Activated naive CD4-positive, alpha-beta T cell treated with anti-CD3 and anti-CD28 coated beads for 36 hours (primary cell): ENCODE measurements at regions of chr6 and their contacts with region 1.

Region 1: GRCh38 chr6:104659053-104659452 is 200.7 kb downstream of the HACE1 start:
- DNase-seq: no peak
- H3K4me3 Mint-ChIP-seq: no peak overlapping the region
- H3K27ac Mint-ChIP-seq: no peak overlapping the region
- H3K4me1 Mint-ChIP-seq: no peaks in the 10 kb centered on the region
- H3K27me3 Mint-ChIP-seq: peaks cover 2% of the 10 kb centered on the region

Region 2: DNA sequence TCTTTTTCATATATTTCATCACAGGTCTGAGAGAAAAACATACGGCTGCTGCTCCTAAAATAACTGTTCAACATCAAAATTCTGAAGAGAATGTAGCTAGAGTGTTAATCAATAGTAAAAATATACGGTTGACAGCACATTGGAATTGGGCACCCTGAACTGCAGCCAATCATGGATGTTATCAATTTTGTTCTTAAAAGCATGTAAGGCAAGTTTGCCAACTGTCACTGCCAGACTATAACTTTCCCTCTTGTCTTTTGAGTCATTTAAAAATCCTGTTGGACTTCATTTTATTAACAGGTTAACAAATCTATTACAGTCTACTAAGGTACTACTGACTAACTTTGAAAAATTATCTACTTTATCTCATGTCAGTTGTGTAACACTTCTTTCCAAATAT is 392.1 kb before region 1 on chr6:
- CTCF ChIA-PET with region 1: no interaction called
- intact Hi-C with region 1: no loop called
- DNase-seq: no peak
- H3K4me3 Mint-ChIP-seq: no peak overlapping the region
- H3K27ac Mint-ChIP-seq: no peak overlapping the region
- H3K4me1 Mint-ChIP-seq: no peaks in the 10 kb centered on the region
- H3K27me3 Mint-ChIP-seq: no peaks in the 10 kb centered on the region

Region 3: DNA sequence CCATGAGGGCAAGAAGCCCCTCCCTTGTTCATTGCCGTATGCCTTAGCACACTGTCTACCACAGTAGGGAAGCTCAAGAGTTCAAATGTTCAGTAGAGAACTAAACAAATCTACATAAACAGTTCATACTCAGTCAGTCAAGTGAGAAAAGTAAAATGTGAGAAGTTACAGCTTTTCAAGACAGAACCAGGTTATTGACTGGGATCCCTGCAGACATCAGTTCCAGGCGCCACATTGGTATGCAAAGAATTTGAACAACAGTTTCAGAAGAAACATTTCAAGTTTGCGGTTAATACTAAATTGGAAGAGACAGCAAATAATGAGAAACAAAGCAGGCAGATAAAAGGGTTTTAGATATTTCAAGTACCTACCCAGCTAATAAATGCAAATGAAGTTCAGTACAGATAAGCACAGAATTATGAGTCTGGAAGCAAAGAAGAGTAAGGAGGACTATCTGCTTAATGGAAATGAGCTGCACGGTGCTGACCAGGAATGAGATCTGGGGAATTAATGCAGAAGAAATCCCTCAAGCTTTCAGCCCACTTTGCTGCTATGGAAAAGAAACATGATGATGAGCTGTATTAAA is 45.5 kb before region 1 on chr6:
- CTCF ChIA-PET with region 1: no interaction called
- intact Hi-C with region 1: loop called (anchors 2 kb)
- DNase-seq: no peak
- H3K4me3 Mint-ChIP-seq: no peak overlapping the region
- H3K27ac Mint-ChIP-seq: no peak overlapping the region
- H3K4me1 Mint-ChIP-seq: peaks cover 4% of the 10 kb centered on the region
- H3K27me3 Mint-ChIP-seq: peaks cover 4% of the 10 kb centered on the region

Region 4: GRCh38 chr6:104705095-104705707 is 46.1 kb after region 1 on chr6:
- CTCF ChIA-PET with region 1: no interaction called
- intact Hi-C with region 1: no loop called
- DNase-seq: peak; percentile 55
- H3K4me3 Mint-ChIP-seq: peak overlapping the region; percentile 38
- H3K27ac Mint-ChIP-seq: no peak overlapping the region
- H3K4me1 Mint-ChIP-seq: peaks cover 32% of the 10 kb centered on the region
- H3K27me3 Mint-ChIP-seq: no peaks in the 10 kb centered on the region

Region 5: GRCh38 chr6:105045526-105045925 is 386.5 kb after region 1 on chr6:
- CTCF ChIA-PET with region 1: no interaction called
- intact Hi-C with region 1: no loop called
- DNase-seq: no peak
- H3K4me3 Mint-ChIP-seq: no peak overlapping the region
- H3K27ac Mint-ChIP-seq: no peak overlapping the region
- H3K4me1 Mint-ChIP-seq: no peaks in the 10 kb centered on the region
- H3K27me3 Mint-ChIP-seq: peaks cover 3% of the 10 kb centered on the region

Region 6: DNA sequence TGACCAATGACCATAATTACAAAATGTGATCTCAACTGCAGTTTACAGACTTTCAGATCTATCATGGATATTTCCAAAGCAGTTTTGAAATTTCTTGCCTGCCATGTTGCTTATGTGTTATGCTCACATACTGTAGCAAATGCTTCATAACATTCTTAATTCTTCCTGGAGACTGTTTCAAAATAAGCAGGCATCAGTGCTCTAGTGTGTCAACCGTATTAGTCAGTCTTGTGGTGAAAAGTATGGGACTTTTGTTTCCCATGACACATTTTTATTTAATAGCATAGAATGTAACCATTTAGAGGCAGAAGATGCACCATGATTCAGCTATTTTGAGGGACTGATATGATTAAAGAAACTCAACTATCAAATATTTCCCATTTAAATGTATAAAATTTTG is 519.1 kb after region 1 on chr6:
- CTCF ChIA-PET with region 1: no interaction called
- intact Hi-C with region 1: no loop called
- DNase-seq: no peak
- H3K4me3 Mint-ChIP-seq: no peak overlapping the region
- H3K27ac Mint-ChIP-seq: no peak overlapping the region
- H3K4me1 Mint-ChIP-seq: no peaks in the 10 kb centered on the region
- H3K27me3 Mint-ChIP-seq: peaks cover 44% of the 10 kb centered on the region